T-cell (primary cell): ENCODE measurements at regions of chr11 and their contacts with region 1.

Region 1: GRCh38 chr11:113387605-113388211 is at the start of gene ANKK1:
- DNase-seq: no peak
- ATAC-seq: no peak
- H3K4me3 ChIP-seq: no peak within 1 kb of the TSS
- H3K4me3 Mint-ChIP-seq: no peak within 1 kb of the TSS
- H3K27ac ChIP-seq: no peak within 1 kb of the TSS
- H3K27ac Mint-ChIP-seq: no peak within 1 kb of the TSS
- H3K4me1 ChIP-seq: peaks cover 0 to 9% of the 10 kb centered on the region in 2 experiments
- H3K4me1 Mint-ChIP-seq: no peaks in the 10 kb centered on the region
- H3K27me3 ChIP-seq: peaks cover 4 to 32% of the 10 kb centered on the region in 2 experiments
- H3K27me3 Mint-ChIP-seq: peaks cover 3 to 5% of the 10 kb centered on the region in 2 donors
- total RNA-seq, gene ANKK1: 1.2 to 4.6 (median 3.3) TPM

Region 2: DNA sequence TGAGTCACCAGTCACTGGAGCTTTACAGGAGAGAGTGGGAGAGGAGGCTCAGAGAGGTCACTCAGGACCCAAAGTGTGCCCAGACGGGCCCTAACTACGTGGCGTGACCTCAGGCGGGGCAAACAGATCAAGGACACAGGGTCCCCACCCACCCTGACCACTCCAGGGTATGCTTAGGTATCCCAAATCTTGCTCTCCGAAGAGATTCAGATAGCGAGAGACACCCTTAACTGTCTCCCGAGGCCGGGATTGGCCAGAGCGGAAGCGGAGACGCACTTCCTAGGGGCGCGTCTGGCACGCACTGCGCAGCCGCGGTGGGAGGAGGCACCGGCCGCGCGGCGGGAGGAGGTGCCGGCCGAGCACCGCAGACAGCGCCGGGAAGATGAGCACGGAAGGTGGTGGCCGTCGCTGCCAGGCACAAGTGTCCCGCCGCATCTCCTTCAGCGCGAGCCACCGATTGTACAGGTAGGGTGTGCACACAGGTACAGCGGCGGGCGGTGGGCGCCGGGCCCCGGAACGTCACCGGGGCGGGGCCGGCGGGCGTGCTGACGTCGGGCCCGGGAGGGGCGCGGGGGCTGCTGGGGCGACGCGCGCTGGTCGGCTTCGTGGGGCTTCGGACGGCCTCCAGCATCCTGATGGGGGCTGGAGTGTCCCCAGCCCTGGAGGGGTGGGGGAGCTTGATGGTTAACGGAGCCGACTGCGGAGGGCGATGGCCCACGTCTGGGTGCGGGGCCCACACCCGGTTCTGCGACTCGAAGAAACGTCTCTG is 1161.5 kb before region 1 on chr11 and contains the start of gene PTS:
- CTCF ChIA-PET with region 1: no interaction called
- POLR2A ChIA-PET with region 1: interaction called in 1 of 2 experiments, 13 read pairs
- DNase-seq: peak; percentile 68 to 91 (median 77)
- ATAC-seq: peak; percentile 90 to 95 (median 94)
- H3K4me3 ChIP-seq: peak within 1 kb of the TSS; percentile 95
- H3K4me3 Mint-ChIP-seq: peak within 1 kb of the TSS; percentile 87 to 89 (median 89)
- H3K27ac ChIP-seq: peak within 1 kb of the TSS; percentile 99
- H3K27ac Mint-ChIP-seq: peak within 1 kb of the TSS; percentile 96 to 97
- H3K4me1 ChIP-seq: peaks cover 13 to 17% of the 10 kb centered on the region in 2 experiments
- H3K4me1 Mint-ChIP-seq: peaks cover 16 to 33% (median 30%) of the 10 kb centered on the region in 3 donors
- H3K27me3 ChIP-seq: peaks cover 0 to 4% of the 10 kb centered on the region in 2 experiments
- H3K27me3 Mint-ChIP-seq: no peaks in the 10 kb centered on the region
- total RNA-seq, gene PTS: 15.1 to 65.8 (median 21.0) TPM

Region 3: GRCh38 chr11:113274713-113275582 is 112.8 kb before region 1 on chr11:
- CTCF ChIA-PET with region 1: no interaction called
- POLR2A ChIA-PET with region 1: no interaction called
- DNase-seq: no peak
- ATAC-seq: no peak
- H3K4me3 ChIP-seq: no peak overlapping the region
- H3K4me3 Mint-ChIP-seq: no peak overlapping the region
- H3K27ac ChIP-seq: no peak overlapping the region
- H3K27ac Mint-ChIP-seq: no peak overlapping the region
- H3K4me1 ChIP-seq: no peaks in the 10 kb centered on the region
- H3K4me1 Mint-ChIP-seq: no peaks in the 10 kb centered on the region
- H3K27me3 ChIP-seq: peaks cover 0 to 12% of the 10 kb centered on the region in 2 experiments
- H3K27me3 Mint-ChIP-seq: peaks cover 3 to 12% of the 10 kb centered on the region in 2 donors

Region 4: DNA sequence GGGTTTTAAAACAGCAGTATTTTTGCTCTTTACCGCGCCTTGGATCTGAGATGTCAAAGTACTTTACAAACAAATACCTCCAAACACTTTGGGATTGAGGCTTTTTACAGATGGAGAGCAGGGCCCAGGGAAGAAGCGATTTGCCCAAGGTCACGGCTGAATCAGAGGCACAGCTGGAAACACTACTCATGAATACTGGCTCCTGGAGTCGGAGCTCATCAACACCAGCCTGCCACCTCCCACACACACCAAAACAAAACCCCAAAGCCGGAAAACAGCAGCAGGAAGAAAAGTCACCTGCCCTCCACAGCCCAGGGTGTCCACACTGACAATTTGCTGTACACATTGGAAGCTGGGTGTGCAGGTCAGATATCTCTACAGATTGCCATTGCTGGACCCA is 1777.1 kb after region 1 on chr11:
- CTCF ChIA-PET with region 1: interaction called in 1 of 2 experiments, 10 read pairs
- POLR2A ChIA-PET with region 1: no interaction called
- DNase-seq: no peak
- ATAC-seq: no peak
- H3K4me3 ChIP-seq: no peak overlapping the region
- H3K4me3 Mint-ChIP-seq: no peak overlapping the region
- H3K27ac ChIP-seq: no peak overlapping the region
- H3K27ac Mint-ChIP-seq: no peak overlapping the region
- H3K4me1 ChIP-seq: no peaks in the 10 kb centered on the region
- H3K4me1 Mint-ChIP-seq: no peaks in the 10 kb centered on the region
- H3K27me3 ChIP-seq: peaks cover 0 to 10% of the 10 kb centered on the region in 2 experiments
- H3K27me3 Mint-ChIP-seq: peaks cover 12 to 20% of the 10 kb centered on the region in 2 donors